ENCODE measurements at regions of chr1 and their contacts with region 1.

Region 1: GRCh38 chr1:11262171-11263049 is at the start of gene MTOR:
- DNase-seq: peak; percentile 97 to 98
- H3K4me3 ChIP-seq: peak within 1 kb of the TSS; percentile 71
- H3K27ac ChIP-seq: no peak within 1 kb of the TSS
- H3K4me1 ChIP-seq: peaks cover 5% of the 10 kb centered on the region; the same call in 1 of the 2 replicates
- H3K27me3 ChIP-seq: no peaks in the 10 kb centered on the region
- CTCF ChIP-seq: no peak
- total RNA-seq, gene MTOR: 34.6 and 37.4 TPM in 2 replicates

Region 2: GRCh38 chr1:10980841-10981727 is 281.3 kb before region 1 on chr1:
- CTCF ChIA-PET with region 1: no interaction called
- POLR2A ChIA-PET with region 1: no interaction called
- intact Hi-C with region 1: no loop called
- DNase-seq: no peak
- H3K4me3 ChIP-seq: no peak overlapping the region
- H3K27ac ChIP-seq: no peak overlapping the region
- H3K4me1 ChIP-seq: no peaks in the 10 kb centered on the region; the same call in none of the 2 replicates
- H3K27me3 ChIP-seq: no peaks in the 10 kb centered on the region
- CTCF ChIP-seq: no peak

Region 3: GRCh38 chr1:11114966-11115365 is 147.4 kb before region 1 on chr1:
- CTCF ChIA-PET with region 1: no interaction called
- POLR2A ChIA-PET with region 1: no interaction called
- intact Hi-C with region 1: no loop called
- DNase-seq: no peak
- H3K4me3 ChIP-seq: no peak overlapping the region
- H3K27ac ChIP-seq: no peak overlapping the region
- H3K4me1 ChIP-seq: no peaks in the 10 kb centered on the region
- H3K27me3 ChIP-seq: no peaks in the 10 kb centered on the region
- CTCF ChIP-seq: no peak

Region 4: GRCh38 chr1:11272832-11273594 is 10.6 kb after region 1 on chr1 and contains the start of gene UBIAD1:
- CTCF ChIA-PET with region 1: interaction called, 7 read pairs
- POLR2A ChIA-PET with region 1: no interaction called
- intact Hi-C with region 1: loop called (anchors 1 kb)
- DNase-seq: peak; percentile 55 to 75
- H3K4me3 ChIP-seq: peak within 1 kb of the TSS; percentile 81
- H3K27ac ChIP-seq: peak within 1 kb of the TSS; percentile 73
- H3K4me1 ChIP-seq: 0 out of 2 replicates have a peak, but pooled peaks cover 4% of the 10 kb centered on the region
- H3K27me3 ChIP-seq: no peaks in the 10 kb centered on the region
- CTCF ChIP-seq: no peak
- total RNA-seq, gene UBIAD1: 11.2 and 12.1 TPM in 2 replicates